AG04450 (cell line): ENCODE measurements at regions of chr4 and their contacts with region 1.

Region 1: GRCh38 chr4:142293536-142293935 is 552.6 kb downstream of the INPP4B start:
- DNase-seq: peak; percentile 7
- H3K4me3 ChIP-seq: no peak overlapping the region
- H3K27ac ChIP-seq: no peak overlapping the region
- H3K27me3 ChIP-seq: no peaks in the 10 kb centered on the region
- CTCF ChIP-seq: no peak

Region 2: GRCh38 chr4:142282870-142283431 is 10.6 kb before region 1 on chr4:
- CTCF ChIA-PET with region 1: interaction called, 11 read pairs
- POLR2A ChIA-PET with region 1: no interaction called
- DNase-seq: no peak
- H3K4me3 ChIP-seq: no peak overlapping the region
- H3K27ac ChIP-seq: no peak overlapping the region
- H3K27me3 ChIP-seq: no peaks in the 10 kb centered on the region
- CTCF ChIP-seq: peak; percentile 48

Region 3: GRCh38 chr4:142314686-142315085 is 21.1 kb after region 1 on chr4:
- CTCF ChIA-PET with region 1: no interaction called
- POLR2A ChIA-PET with region 1: no interaction called
- DNase-seq: no peak
- H3K4me3 ChIP-seq: no peak overlapping the region
- H3K27ac ChIP-seq: no peak overlapping the region
- H3K27me3 ChIP-seq: no peaks in the 10 kb centered on the region
- CTCF ChIP-seq: no peak

Region 4: GRCh38 chr4:142861351-142861750 is 567.8 kb after region 1 on chr4:
- CTCF ChIA-PET with region 1: no interaction called
- POLR2A ChIA-PET with region 1: no interaction called
- DNase-seq: no peak
- H3K4me3 ChIP-seq: no peak overlapping the region
- H3K27ac ChIP-seq: no peak overlapping the region
- H3K27me3 ChIP-seq: no peaks in the 10 kb centered on the region
- CTCF ChIP-seq: no peak